Activated B cell treated with CpG ODN at 0.5 μM for 24 hours (primary cell): ENCODE measurements at regions of chr5 and their contacts with region 1.

Region 1: DNA sequence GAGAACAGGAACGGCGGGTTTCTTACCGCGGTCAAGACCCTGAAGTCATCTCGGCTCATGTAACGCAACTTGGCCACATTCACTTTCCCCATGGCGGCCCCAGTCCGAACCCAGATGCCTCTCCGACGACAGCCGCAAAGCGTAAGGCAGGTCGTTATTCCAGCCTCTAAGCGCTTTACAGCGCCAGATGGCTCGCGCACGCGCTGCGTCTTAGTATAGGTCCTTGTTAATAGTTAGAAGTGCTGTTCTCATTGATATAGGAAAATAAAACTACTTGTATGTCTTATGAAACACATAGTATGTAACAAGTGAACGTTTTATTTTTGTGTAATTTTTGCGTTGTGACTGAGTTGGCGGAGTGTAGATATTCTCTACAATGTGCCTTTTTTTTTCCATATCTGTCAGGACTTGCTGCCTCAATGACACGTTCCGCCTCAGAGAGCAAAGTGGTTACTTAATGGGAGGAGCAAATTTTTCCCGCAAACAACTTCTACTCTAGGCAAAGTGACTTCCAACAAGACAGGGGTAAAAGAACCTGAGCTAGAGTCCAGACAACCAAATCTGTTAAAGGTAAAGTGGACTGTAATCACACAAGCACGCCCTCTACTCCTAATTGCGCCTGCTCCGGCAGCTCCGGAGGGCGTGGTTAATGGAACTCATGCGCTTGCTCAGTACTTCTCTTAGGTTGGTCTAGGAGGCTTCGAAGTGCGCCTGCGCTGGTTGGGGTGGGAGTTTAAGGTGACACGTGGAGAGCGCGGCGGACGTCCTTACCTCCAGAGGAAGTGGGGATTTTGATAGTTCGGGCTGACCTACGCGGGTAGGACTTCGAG is at the start of gene RIOK2:
- DNase-seq: peak; percentile 78
- ATAC-seq: peak; percentile 89
- H3K4me3 Mint-ChIP-seq: peak within 1 kb of the TSS; percentile 96
- H3K27ac Mint-ChIP-seq: peak within 1 kb of the TSS; percentile 99
- H3K4me1 Mint-ChIP-seq: peaks cover 34% of the 10 kb centered on the region
- H3K27me3 Mint-ChIP-seq: no peaks in the 10 kb centered on the region
- CTCF ChIP-seq: no peak
- total RNA-seq, gene RIOK2: 38.3 and 41.4 TPM in 2 replicates

Region 2: DNA sequence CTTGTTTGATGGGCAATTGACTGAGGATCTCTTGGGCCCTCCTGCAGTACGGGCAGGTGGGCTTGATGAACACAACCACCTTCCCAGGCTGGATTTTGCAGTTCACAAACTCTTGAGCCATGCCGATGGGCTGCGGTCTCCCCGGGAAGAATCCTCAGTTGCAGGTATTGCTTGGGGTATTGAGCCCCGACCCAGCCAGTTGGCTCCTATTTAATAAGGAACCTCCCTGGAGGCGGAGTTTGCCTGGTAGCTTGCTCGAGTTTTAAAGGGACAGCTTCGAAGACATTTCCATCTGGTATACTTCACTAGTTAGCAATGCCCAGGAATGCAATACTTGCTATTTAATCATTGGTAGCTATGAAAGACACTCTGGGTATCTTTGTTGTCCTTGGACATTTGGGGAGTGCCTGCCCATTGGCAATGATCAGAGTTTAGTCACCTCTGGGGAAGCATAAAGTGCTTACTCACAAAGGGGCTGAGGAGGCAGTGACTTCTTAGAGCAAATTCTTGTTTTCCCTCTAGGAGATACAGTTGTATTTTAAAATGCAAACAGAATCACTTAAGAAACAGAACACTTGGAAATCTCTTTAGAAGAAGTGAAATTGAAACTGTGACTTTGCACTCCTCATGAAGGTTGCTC is 1360.7 kb before region 1 on chr5 and contains the start of gene GLRX:
- CTCF ChIA-PET with region 1: no interaction called
- POLR2A ChIA-PET with region 1: interaction called, 8 read pairs
- intact Hi-C with region 1: loop called (anchors 5 kb)
- DNase-seq: no peak
- ATAC-seq: peak; percentile 30
- H3K4me3 Mint-ChIP-seq: peak within 1 kb of the TSS; percentile 95
- H3K27ac Mint-ChIP-seq: peak within 1 kb of the TSS; percentile 98
- H3K4me1 Mint-ChIP-seq: peaks cover 72% of the 10 kb centered on the region
- H3K27me3 Mint-ChIP-seq: no peaks in the 10 kb centered on the region
- CTCF ChIP-seq: no peak
- total RNA-seq, gene GLRX: 55.4 and 60.2 TPM in 2 replicates

Region 3: DNA sequence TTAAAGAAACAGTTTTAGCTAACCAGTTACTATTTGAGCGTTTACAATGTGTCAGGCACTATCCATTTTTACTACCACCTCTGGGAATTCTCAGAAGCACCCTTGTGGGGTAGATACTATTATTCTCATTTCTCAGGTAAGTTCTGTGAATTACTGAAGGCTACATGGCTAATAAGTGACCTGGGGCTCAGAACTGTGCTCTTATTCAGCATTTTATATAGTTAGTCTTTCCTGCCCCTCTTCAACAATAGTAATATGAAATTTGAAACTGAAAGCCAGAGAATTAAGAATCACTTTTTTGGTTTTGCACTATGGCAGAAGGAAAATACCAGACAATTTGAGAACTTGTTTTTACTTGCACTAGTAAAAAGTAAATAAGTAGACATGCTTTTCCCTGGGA is 1233.5 kb before region 1 on chr5:
- CTCF ChIA-PET with region 1: no interaction called
- POLR2A ChIA-PET with region 1: no interaction called
- intact Hi-C with region 1: no loop called
- DNase-seq: no peak
- ATAC-seq: no peak
- H3K4me3 Mint-ChIP-seq: no peak overlapping the region
- H3K27ac Mint-ChIP-seq: no peak overlapping the region
- H3K4me1 Mint-ChIP-seq: peaks cover 26% of the 10 kb centered on the region
- H3K27me3 Mint-ChIP-seq: no peaks in the 10 kb centered on the region
- CTCF ChIP-seq: no peak

Region 4: GRCh38 chr5:97167435-97167834 is 15.9 kb before region 1 on chr5:
- CTCF ChIA-PET with region 1: no interaction called
- POLR2A ChIA-PET with region 1: interaction called, 6 read pairs
- intact Hi-C with region 1: loop called (anchors 1 kb)
- DNase-seq: no peak
- ATAC-seq: peak; percentile 94
- H3K4me3 Mint-ChIP-seq: peak overlapping the region; percentile 70
- H3K27ac Mint-ChIP-seq: peak overlapping the region; percentile 87
- H3K4me1 Mint-ChIP-seq: peaks cover 11% of the 10 kb centered on the region
- H3K27me3 Mint-ChIP-seq: no peaks in the 10 kb centered on the region
- CTCF ChIP-seq: no peak

Region 5: DNA sequence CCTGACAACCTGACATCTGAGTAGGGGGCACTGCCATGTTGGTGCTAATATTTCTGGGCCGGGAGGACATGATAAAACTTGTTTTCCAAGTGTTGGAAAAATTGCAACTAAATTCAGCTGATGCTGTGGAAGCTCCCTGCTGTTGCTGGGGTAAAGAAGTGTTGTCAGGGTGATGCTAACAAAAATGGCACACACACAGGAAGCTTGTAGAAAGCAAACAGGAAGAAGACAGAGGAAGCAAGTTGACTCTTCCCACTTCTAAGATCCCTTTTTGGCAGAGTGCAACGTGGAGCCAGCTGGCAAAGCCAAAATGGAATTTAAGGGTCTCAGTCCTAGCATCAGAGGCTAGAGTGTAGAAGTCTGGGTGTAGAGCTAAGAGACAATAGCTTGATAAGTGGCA is 11.1 kb after region 1 on chr5:
- CTCF ChIA-PET with region 1: no interaction called
- POLR2A ChIA-PET with region 1: no interaction called
- intact Hi-C with region 1: no loop called
- DNase-seq: no peak
- ATAC-seq: no peak
- H3K4me3 Mint-ChIP-seq: no peak overlapping the region
- H3K27ac Mint-ChIP-seq: no peak overlapping the region
- H3K4me1 Mint-ChIP-seq: peaks cover 18% of the 10 kb centered on the region
- H3K27me3 Mint-ChIP-seq: peaks cover 4% of the 10 kb centered on the region
- CTCF ChIP-seq: no peak

Region 6: GRCh38 chr5:97266576-97266975 is 83.3 kb after region 1 on chr5:
- CTCF ChIA-PET with region 1: no interaction called
- POLR2A ChIA-PET with region 1: no interaction called
- intact Hi-C with region 1: no loop called
- DNase-seq: no peak
- ATAC-seq: no peak
- H3K4me3 Mint-ChIP-seq: no peak overlapping the region
- H3K27ac Mint-ChIP-seq: no peak overlapping the region
- H3K4me1 Mint-ChIP-seq: no peaks in the 10 kb centered on the region
- H3K27me3 Mint-ChIP-seq: no peaks in the 10 kb centered on the region
- CTCF ChIP-seq: no peak

Region 7: DNA sequence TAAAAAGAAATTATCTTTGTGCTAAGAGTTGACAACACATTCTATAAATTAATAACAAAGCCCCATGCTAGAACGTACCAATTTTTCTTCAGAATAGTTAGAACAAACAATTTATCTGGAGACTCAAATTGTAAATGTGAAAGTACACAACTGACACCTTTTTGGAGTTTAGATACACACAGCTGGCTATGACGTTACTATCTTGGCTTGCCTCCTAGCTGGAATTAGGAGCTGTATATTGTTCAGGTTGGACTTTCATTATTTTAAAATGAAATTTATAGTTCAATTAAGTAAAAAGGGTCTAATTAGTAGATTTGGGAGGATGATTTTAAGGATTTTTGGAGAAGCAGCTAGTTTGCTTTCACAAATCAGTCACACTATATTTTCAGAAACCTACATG is 393.6 kb after region 1 on chr5:
- CTCF ChIA-PET with region 1: no interaction called
- POLR2A ChIA-PET with region 1: no interaction called
- intact Hi-C with region 1: no loop called
- DNase-seq: no peak
- ATAC-seq: no peak
- H3K4me3 Mint-ChIP-seq: no peak overlapping the region
- H3K27ac Mint-ChIP-seq: no peak overlapping the region
- H3K4me1 Mint-ChIP-seq: no peaks in the 10 kb centered on the region
- H3K27me3 Mint-ChIP-seq: no peaks in the 10 kb centered on the region
- CTCF ChIP-seq: no peak

Region 8: DNA sequence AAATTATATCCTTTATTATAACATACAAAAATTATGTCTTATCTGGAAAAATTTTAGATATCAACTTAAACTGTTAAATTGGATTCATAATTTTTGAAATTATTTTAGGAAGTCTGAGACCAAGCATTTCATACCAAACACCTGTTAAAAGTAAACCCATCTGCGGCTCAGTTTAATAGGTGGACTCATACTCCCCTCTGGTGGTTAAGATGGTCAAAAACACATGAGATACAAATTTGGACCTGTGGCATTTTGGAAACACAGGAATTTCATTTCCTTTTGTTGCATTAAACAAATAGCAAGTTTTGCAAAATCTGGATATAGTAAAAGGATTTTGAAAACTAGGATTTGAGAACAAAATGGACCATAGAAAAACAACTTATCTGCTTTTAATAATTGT is 1643.8 kb after region 1 on chr5:
- CTCF ChIA-PET with region 1: no interaction called
- POLR2A ChIA-PET with region 1: no interaction called
- intact Hi-C with region 1: loop called (anchors 2 kb)
- DNase-seq: no peak
- ATAC-seq: no peak
- H3K4me3 Mint-ChIP-seq: no peak overlapping the region
- H3K27ac Mint-ChIP-seq: no peak overlapping the region
- H3K4me1 Mint-ChIP-seq: no peaks in the 10 kb centered on the region
- H3K27me3 Mint-ChIP-seq: no peaks in the 10 kb centered on the region
- CTCF ChIP-seq: no peak

Region 9: GRCh38 chr5:99025298-99026045 is 1842.2 kb after region 1 on chr5:
- CTCF ChIA-PET with region 1: no interaction called
- POLR2A ChIA-PET with region 1: no interaction called
- intact Hi-C with region 1: loop called (anchors 5 kb)
- DNase-seq: no peak
- ATAC-seq: no peak
- H3K4me3 Mint-ChIP-seq: no peak overlapping the region
- H3K27ac Mint-ChIP-seq: peak overlapping the region; percentile 59
- H3K4me1 Mint-ChIP-seq: peaks cover 58% of the 10 kb centered on the region
- H3K27me3 Mint-ChIP-seq: no peaks in the 10 kb centered on the region
- CTCF ChIP-seq: no peak